Left colon (tissue), 2 donors: ENCODE measurements at regions of chr5 and their contacts with region 1.

Region 1: DNA sequence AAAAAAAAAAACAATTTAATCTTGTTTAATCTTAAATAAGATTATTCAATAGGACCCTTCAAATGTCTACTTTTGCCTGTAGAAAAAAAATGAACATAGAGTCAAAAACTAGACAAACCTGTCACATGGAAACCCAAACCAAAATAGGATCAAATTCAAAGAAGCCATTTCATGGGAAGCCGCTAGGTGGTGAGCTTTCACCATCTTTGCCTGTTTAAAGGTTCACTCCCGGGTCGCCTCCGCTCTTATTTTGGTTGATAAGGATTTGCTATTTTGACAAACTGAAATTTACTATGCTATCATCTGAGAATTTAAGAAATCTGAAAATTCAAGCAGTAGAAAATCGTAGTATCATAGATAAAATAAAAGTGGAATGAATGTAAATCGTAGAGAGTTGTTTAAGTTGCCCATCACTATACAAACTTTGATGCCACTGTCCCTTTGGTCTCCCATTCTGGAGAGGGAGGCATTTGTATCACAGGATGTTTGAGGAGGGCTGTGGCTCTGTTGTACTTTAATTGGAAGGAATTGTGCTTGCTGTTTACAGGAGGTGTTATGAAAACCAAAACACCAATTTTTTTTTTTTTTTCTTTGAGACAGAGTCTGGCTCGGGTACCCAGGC is 43.5 kb upstream of the DNAH5 start:
- DNase-seq: peak in 1 of 2 donors; percentile 36
- ATAC-seq: peak; percentile 72

Region 2: DNA sequence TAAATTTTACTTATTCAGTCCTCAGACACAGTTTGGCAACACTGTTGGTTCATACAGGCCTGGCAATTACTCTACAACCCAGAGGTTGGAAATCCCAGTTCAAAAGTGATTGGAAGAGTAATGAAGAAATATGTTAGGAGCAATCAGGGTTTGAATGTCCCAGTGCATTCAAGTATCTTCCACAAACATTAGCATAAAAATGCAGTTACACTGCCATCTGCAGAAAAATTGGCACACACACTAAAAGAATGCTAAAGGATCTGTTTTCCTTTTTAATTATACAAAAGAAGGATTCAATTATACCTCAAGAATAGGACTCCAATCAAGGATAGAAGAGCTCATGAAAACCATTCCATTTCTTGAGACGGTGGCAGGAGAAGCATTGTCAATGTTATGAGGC is 173.7 kb before region 1 on chr5:
- intact Hi-C with region 1: no loop called
- DNase-seq: no peak
- ATAC-seq: no peak

Region 3: DNA sequence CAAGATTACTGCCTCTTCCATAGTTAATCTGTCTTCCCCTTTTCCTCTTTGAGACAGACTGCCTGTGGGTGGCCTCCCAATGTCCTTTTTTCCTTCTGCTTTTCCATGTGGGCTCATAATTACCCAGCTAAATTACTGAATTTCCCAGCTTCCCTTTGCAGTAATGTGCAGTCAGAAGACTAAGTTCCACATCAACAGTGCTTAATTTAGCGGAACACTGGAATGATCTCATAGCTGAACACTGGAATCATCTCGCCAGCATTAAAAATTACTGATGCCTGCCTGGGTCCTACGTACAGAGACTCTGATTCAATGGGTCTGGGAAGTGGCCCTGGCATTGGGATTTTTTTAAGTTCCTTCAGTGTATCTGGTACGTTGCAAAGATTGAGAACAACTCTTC is 127.8 kb before region 1 on chr5:
- intact Hi-C with region 1: no loop called
- DNase-seq: no peak
- ATAC-seq: no peak

Region 4: DNA sequence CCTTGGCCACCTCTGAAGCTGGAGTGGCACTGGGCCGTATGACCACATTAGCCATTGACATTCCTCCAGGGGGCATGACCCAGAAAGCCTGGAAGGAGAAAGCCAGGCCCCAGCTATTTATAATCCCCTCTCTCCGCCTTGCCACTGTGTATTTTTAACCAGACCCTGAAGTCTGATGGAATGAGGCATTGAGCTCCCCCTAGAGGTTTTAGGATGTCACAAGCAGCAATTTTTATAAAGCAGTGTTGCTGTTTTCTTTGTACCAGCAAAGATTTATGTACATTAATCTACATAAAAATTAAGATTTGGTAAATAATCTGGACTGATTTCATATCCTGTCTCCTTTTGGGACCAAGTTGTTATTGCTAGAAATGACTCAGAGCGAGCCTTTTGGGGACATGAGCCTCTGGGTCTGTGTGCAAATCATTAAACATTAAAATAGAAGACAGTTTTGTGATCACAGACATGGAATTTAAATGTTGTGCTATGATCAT is 282.3 kb after region 1 on chr5:
- intact Hi-C with region 1: no loop called
- DNase-seq: no peak
- ATAC-seq: peak; percentile 79

Region 5: DNA sequence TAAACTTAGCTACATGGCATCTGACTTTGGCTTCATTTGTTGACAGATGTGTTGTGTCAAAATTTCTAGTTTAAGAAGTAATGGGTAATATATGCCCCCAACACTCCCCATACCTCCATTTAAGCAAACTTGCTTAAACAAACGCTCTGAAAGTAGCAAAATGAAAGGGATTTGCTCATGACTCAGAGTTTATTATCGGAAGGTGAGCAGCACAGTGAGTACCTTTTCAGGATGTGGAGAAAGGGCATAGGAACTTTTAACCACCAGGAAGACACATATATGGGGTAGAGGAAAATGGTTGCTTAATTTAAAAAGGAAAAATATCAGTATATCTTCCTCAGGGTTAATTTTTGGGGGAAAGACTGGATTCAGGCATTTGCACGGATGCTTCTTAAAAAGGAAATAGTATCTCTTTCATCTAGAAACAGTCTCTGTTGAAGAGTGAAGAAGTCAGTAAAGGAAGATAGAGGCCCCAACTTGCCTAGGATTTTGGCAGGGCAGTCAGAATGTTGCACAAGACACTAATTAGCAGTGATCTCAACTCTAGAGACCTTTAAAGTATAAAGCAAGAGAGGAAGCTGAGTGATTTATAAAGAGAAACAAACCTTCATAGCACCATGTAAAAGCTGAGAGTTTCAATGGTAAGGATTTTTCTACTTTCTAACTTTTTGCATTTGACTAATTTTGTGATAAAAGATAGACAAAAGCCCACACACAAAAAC is 310.3 kb after region 1 on chr5:
- intact Hi-C with region 1: loop called in 1 of 2 experiments (anchors 10 kb)
- DNase-seq: no peak
- ATAC-seq: no peak

Region 6: GRCh38 chr5:14379739-14380497 is 392.0 kb after region 1 on chr5:
- intact Hi-C with region 1: loop called in 1 of 2 experiments (anchors 10 kb)
- DNase-seq: no peak
- ATAC-seq: no peak

Region 7: GRCh38 chr5:14644623-14645237 is 656.8 kb after region 1 on chr5:
- intact Hi-C with region 1: loop called in 1 of 2 experiments (anchors 10 kb)
- DNase-seq: no peak
- ATAC-seq: no peak